Heart left ventricle (tissue), 16 donors: ENCODE measurements at regions of chr3 and their contacts with region 1.

Region 1: GRCh38 chr3:149575961-149576564 is 81.8 kb downstream of the WWTR1 start:
- DNase-seq: peak in 3 of 5 donors; percentile 37 to 57 (median 51)
- ATAC-seq: peak; percentile 45 to 90 (median 84)
- H3K4me3 ChIP-seq: peak overlapping the region in 4 of 12 donors; percentile 11 to 29 (median 14)
- H3K27ac ChIP-seq: peak overlapping the region; percentile 42 to 91 (median 78)
- H3K4me1 ChIP-seq: peaks cover 5 to 99% (median 87%) of the 10 kb centered on the region in 12 donors
- H3K27me3 ChIP-seq: no peaks in the 10 kb centered on the region
- CTCF ChIP-seq: no peak
- POLR2A ChIP-seq: peak in 1 of 2 donors; percentile 10

Region 2: DNA sequence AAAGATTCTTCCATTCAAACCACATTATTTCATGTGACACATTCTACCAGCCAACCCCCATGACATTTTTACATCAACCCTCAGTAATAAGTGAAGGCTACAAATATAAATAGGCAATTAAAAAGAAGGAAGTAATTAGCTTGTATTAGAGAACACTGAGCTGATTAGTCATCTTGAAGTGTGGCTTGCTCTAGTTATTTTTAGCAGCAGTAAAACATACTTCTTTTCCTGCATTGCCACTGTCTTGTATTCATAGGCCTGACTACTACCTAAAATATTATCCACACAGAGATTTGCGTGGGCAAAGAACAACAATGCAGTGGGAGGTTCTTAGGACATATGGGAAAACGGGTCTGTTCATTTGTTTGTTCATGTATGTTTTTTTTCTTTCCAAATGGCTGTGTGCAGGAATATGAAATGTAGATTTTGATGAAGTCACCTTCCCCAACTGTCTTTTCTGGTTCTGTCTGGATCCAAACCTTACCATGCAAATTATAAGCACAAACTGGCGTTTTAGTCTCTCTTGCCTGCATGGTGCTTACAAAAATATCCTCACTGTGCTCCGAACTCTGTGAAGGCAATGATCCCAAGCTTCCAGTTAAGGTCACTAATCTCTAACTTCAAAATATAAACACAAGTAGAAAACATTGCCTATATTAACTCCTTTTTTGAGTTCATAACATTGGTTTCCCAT is 133.1 kb before region 1 on chr3:
- intact Hi-C with region 1: no loop called
- DNase-seq: no peak
- ATAC-seq: no peak
- H3K4me3 ChIP-seq: no peak overlapping the region
- H3K27ac ChIP-seq: no peak overlapping the region
- H3K4me1 ChIP-seq: peaks cover 0 to 18% (median 2%) of the 10 kb centered on the region in 12 donors
- H3K27me3 ChIP-seq: no peaks in the 10 kb centered on the region
- CTCF ChIP-seq: no peak
- POLR2A ChIP-seq: no peak

Region 3: DNA sequence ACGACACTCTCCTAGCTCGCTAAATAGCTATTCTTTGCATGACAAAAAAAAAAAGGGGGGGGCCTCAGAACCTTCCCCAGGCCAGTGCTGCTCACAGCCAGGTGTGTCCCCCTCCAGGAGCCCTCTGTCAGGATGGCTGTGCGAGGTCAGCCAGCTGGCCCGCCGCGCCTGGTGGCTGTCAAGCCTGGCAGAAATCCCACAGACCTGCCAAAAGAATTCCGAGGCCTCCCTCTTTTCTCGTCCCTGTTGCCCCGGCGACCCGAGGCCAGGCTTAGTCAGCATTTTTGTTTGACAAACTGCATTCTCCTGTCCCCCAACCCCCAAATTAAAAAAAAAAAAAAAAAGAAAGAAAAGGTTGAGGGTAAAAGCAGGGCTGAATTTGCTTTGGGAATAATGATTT is 39.6 kb before region 1 on chr3:
- intact Hi-C with region 1: loop called in 1 of 10 experiments (anchors 5 kb)
- DNase-seq: peak; percentile 75 to 86 (median 80)
- ATAC-seq: peak; percentile 82 to 85 (median 84)
- H3K4me3 ChIP-seq: no peak overlapping the region
- H3K27ac ChIP-seq: peak overlapping the region in 5 of 12 donors; percentile 7 to 63 (median 20)
- H3K4me1 ChIP-seq: peaks cover 0 to 73% (median 43%) of the 10 kb centered on the region in 12 donors
- H3K27me3 ChIP-seq: no peaks in the 10 kb centered on the region
- CTCF ChIP-seq: no peak
- POLR2A ChIP-seq: no peak

Region 4: GRCh38 chr3:149621218-149622005 is 45.3 kb after region 1 on chr3:
- intact Hi-C with region 1: loop called in 2 of 10 experiments (anchors 5 kb)
- DNase-seq: no peak
- ATAC-seq: peak in 1 of 4 donors; percentile 21
- H3K4me3 ChIP-seq: no peak overlapping the region
- H3K27ac ChIP-seq: peak overlapping the region in 8 of 12 donors; percentile 20 to 73 (median 50)
- H3K4me1 ChIP-seq: peaks cover 9 to 88% (median 63%) of the 10 kb centered on the region in 12 donors
- H3K27me3 ChIP-seq: peaks cover 0 to 11% (median 0%) of the 10 kb centered on the region in 9 donors
- CTCF ChIP-seq: no peak
- POLR2A ChIP-seq: no peak